Cardiac septum (tissue), 1 donor: ENCODE measurements at regions of chr3 and their contacts with region 1.

Region 1: GRCh38 chr3:9843715-9844438 is at the start of gene RPUSD3:
- DNase-seq: peak; percentile 100
- total RNA-seq, gene RPUSD3: 28.3 TPM

Region 2: GRCh38 chr3:9890249-9891071 is 46.6 kb after region 1 on chr3 and contains the start of gene JAGN1:
- intact Hi-C with region 1: loop called (anchors 2 kb)
- DNase-seq: peak; percentile 95
- total RNA-seq, gene JAGN1: 17.3 TPM

Region 3: GRCh38 chr3:9946112-9947024 is 102.5 kb after region 1 on chr3:
- intact Hi-C with region 1: no loop called
- DNase-seq: peak; percentile 91

Region 4: DNA sequence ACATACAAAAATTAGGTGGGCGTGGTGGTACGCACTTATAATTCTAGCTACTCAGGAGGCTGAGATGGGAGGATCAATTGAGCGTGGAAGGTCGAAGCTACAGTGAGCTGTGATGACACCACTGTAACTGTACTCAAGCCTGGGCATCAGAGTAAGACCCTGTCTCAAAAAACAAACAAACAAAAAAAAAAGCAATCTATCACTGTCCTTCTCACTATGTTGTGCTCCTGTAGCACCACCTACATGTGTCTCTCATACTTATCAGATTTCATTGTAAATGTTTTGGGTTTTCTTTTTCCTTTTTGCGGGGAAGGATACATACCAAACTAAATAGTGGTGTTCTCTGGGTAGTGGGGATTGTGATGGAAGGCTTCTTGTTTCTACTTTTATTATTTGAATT is 197.2 kb after region 1 on chr3:
- intact Hi-C with region 1: no loop called
- DNase-seq: no peak